OCI-LY7 (cell line): ENCODE measurements at regions of chr16 and their contacts with region 1.

Region 1: DNA sequence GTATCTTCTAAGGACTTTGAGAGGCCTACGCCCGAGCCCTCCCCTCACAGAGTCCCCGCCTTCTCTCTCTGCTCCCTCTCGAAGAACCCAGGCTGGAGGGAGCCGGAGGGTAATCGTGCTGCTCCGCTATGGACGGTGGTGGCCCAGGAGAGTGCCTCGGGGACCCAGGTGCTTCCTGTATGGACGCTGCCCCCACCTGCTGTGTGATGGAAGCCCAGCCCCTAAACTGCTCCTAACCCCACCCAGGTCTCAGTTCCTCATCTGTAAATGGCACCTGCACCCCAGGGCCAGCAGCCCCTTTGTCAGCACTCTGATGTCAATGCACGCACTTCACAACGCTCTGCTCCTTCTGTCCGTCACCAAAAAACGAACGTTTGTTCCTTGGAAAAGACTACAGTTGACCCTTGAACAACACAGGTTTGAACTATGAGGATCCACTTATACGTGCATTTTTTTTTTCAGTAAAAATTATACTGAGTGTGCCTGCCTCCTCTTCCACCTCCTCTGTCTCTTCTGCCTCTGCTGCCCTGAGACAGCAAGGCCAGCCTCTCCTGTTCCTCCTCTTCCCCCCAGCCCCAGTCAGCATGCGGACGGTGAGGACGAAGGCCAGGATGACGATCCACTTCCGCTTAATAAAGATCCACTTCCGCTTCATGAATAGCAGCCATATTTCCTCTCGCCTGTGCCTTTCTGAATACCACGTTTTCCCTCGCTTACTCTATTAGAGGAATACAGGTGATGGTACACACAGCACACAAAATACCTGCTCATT is 118.3 kb downstream of the BANP start:
- DNase-seq: peak; percentile 98
- H3K4me3 ChIP-seq: peak overlapping the region; percentile 30
- H3K27ac ChIP-seq: peak overlapping the region; percentile 92
- H3K4me1 ChIP-seq: peaks cover 29% of the 10 kb centered on the region
- CTCF ChIP-seq: no peak

Region 2: GRCh38 chr16:87939303-87940077 is 130.1 kb before region 1 on chr16:
- CTCF ChIA-PET with region 1: no interaction called
- POLR2A ChIA-PET with region 1: no interaction called
- intact Hi-C with region 1: no loop called
- DNase-seq: no peak
- H3K4me3 ChIP-seq: no peak overlapping the region
- H3K27ac ChIP-seq: no peak overlapping the region
- H3K4me1 ChIP-seq: no peaks in the 10 kb centered on the region
- CTCF ChIP-seq: no peak

Region 3: GRCh38 chr16:87950765-87951549 is 118.6 kb before region 1 on chr16 and contains the start of gene BANP:
- CTCF ChIA-PET with region 1: no interaction called
- POLR2A ChIA-PET with region 1: no interaction called
- intact Hi-C with region 1: loop called (anchors 2 kb)
- DNase-seq: peak; percentile 100
- H3K4me3 ChIP-seq: peak within 1 kb of the TSS; percentile 74
- H3K27ac ChIP-seq: peak within 1 kb of the TSS; percentile 76
- H3K4me1 ChIP-seq: peaks cover 53% of the 10 kb centered on the region
- CTCF ChIP-seq: peak; percentile 65
- total RNA-seq, gene BANP: 37.1 and 39.6 TPM in 2 replicates

Region 4: DNA sequence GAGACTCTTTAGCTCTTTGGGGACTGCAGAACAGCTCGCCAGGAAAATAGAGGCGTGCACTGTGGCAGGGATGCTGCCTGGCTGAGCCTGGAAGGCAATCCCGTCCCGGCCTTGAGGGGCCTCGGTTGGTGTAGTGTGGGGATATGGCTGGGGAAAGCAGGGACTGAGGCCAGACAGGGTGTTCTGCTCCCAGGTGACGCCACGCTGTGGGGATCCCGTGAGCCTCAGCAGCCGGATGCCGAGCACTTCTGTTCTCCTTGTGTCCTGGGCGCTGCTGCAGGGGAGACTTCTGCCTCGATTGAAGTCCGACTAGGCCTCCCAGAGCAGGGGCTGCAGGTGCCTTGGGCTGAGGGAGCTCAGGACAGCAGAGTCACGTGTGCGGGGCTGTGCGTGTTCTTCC is 45.8 kb before region 1 on chr16:
- CTCF ChIA-PET with region 1: no interaction called
- POLR2A ChIA-PET with region 1: no interaction called
- intact Hi-C with region 1: loop called (anchors 1 kb)
- DNase-seq: no peak
- H3K4me3 ChIP-seq: no peak overlapping the region
- H3K27ac ChIP-seq: no peak overlapping the region
- H3K4me1 ChIP-seq: no peaks in the 10 kb centered on the region
- CTCF ChIP-seq: no peak

Region 5: GRCh38 chr16:88045820-88046303 is 23.7 kb before region 1 on chr16:
- CTCF ChIA-PET with region 1: no interaction called
- POLR2A ChIA-PET with region 1: no interaction called
- intact Hi-C with region 1: loop called (anchors 1 kb)
- DNase-seq: peak; percentile 92
- H3K4me3 ChIP-seq: peak overlapping the region; percentile 28
- H3K27ac ChIP-seq: peak overlapping the region; percentile 69
- H3K4me1 ChIP-seq: peaks cover 38% of the 10 kb centered on the region
- CTCF ChIP-seq: no peak